ENCODE measurements at regions of chr9 and their contacts with region 1.

Region 1: GRCh38 chr9:79883073-79883645 is 311.4 kb downstream of the TLE4 start:
- DNase-seq: peak in 7 of 9 donors; percentile 10 to 63 (median 60)
- ATAC-seq: peak; percentile 88
- H3K4me3 ChIP-seq: peak overlapping the region; percentile 24
- H3K4me3 Mint-ChIP-seq: peak overlapping the region; percentile 45 to 84 (median 79)
- H3K27ac ChIP-seq: no peak overlapping the region
- H3K27ac Mint-ChIP-seq: peak overlapping the region in 7 of 9 donors; percentile 26 to 84 (median 57)
- H3K4me1 ChIP-seq: peaks cover 29 to 30% of the 10 kb centered on the region in 2 donors
- H3K4me1 Mint-ChIP-seq: peaks cover 35 to 80% (median 74%) of the 10 kb centered on the region in 7 donors
- H3K27me3 ChIP-seq: no peaks in the 10 kb centered on the region
- H3K27me3 Mint-ChIP-seq: peaks cover 0 to 2% (median 0%) of the 10 kb centered on the region in 5 donors

Region 2: GRCh38 chr9:79757881-79758669 is 125.1 kb before region 1 on chr9:
- CTCF ChIA-PET with region 1: no interaction called
- POLR2A ChIA-PET with region 1: no interaction called
- intact Hi-C with region 1: loop called in 1 of 2 experiments (anchors 5 kb)
- DNase-seq: peak in 2 of 9 donors; percentile 3 to 11
- ATAC-seq: no peak
- H3K4me3 ChIP-seq: no peak overlapping the region
- H3K4me3 Mint-ChIP-seq: no peak overlapping the region
- H3K27ac ChIP-seq: no peak overlapping the region
- H3K27ac Mint-ChIP-seq: no peak overlapping the region
- H3K4me1 ChIP-seq: no peaks in the 10 kb centered on the region
- H3K4me1 Mint-ChIP-seq: peaks cover 0 to 4% (median 0%) of the 10 kb centered on the region in 7 donors
- H3K27me3 ChIP-seq: no peaks in the 10 kb centered on the region
- H3K27me3 Mint-ChIP-seq: peaks cover 0 to 2% (median 0%) of the 10 kb centered on the region in 5 donors

Region 3: GRCh38 chr9:79812507-79813257 is 70.5 kb before region 1 on chr9:
- CTCF ChIA-PET with region 1: no interaction called
- POLR2A ChIA-PET with region 1: no interaction called
- intact Hi-C with region 1: loop called in 1 of 2 experiments (anchors 5 kb)
- DNase-seq: peak in 4 of 9 donors; percentile 2 to 8 (median 4)
- ATAC-seq: peak; percentile 65
- H3K4me3 ChIP-seq: peak overlapping the region; percentile 27
- H3K4me3 Mint-ChIP-seq: peak overlapping the region; percentile 37 to 95 (median 83)
- H3K27ac ChIP-seq: peak overlapping the region; percentile 14
- H3K27ac Mint-ChIP-seq: peak overlapping the region in 8 of 9 donors; percentile 35 to 83 (median 68)
- H3K4me1 ChIP-seq: peaks cover 0 to 9% of the 10 kb centered on the region in 2 donors
- H3K4me1 Mint-ChIP-seq: peaks cover 17 to 46% (median 31%) of the 10 kb centered on the region in 7 donors
- H3K27me3 ChIP-seq: no peaks in the 10 kb centered on the region
- H3K27me3 Mint-ChIP-seq: peaks cover 0 to 8% (median 0%) of the 10 kb centered on the region in 5 donors

Measured in naive thymus-derived CD4-positive, alpha-beta T cell (primary cell).